Aorta (tissue), 5 donors: ENCODE measurements at regions of chr17 and their contacts with region 1.

Region 1: GRCh38 chr17:21284319-21285163 is at the start of gene MAP2K3:
- DNase-seq: peak; percentile 100
- ATAC-seq: peak; percentile 90
- H3K4me3 ChIP-seq: peak within 1 kb of the TSS; percentile 70 to 85
- H3K27ac ChIP-seq: peak within 1 kb of the TSS; percentile 63 to 94
- H3K4me1 ChIP-seq: peaks cover 3 to 8% of the 10 kb centered on the region in 2 donors
- H3K27me3 ChIP-seq: no peaks in the 10 kb centered on the region
- total RNA-seq, gene MAP2K3: 58.7 to 82.6 TPM

Region 2: DNA sequence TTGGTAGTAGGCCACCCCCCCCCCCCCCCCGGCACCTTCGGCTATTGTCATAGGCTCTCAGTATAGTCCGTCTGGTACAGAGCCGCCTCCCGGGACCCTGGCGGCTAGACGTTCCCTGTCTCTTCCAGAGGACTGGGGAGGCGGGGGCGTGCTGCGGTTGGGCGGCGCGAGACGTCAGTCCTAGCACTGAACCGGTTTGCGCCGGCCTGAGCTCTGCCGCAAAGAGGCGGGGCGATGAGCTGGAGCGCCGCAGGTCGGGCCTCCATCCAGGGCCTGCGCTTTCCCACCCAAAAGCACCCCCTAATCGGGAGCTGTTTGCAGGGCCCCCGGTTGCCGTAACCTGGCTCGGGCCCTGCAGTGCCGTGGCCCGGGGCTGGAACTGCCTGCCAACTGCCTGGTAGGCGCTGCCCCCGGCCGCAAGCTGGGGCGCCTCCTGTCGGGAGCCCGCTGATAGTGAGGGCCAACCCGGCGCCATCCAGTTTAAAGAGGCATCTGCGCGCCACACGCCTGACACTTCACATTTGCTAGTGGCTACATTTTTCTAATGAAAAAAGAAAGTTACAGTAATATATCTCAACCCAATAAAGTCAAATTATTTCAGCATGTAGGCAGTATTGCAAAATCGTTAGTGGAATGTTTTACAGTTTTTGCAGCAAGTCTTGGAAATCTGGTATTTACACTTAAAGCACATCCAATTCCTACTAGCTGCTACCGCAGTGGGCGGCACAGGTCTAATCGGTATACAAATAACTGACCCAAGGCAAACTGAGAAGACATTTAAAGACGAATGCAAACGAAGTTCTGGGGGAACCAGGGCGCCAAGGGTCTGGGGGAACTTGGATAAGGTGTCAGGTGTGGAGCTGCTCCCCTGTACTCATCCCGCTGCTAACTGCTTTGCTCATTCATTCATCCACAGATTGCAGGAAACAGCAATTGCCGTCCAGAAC is 241.0 kb before region 1 on chr17:
- intact Hi-C with region 1: loop called in 1 of 2 experiments (anchors 2 kb)
- DNase-seq: peak; percentile 99 to 100
- ATAC-seq: peak; percentile 97
- H3K4me3 ChIP-seq: peak overlapping the region; percentile 23 to 83
- H3K27ac ChIP-seq: peak overlapping the region in 1 of 2 donors; percentile 84
- H3K4me1 ChIP-seq: peaks cover 0 to 2% of the 10 kb centered on the region in 2 donors
- H3K27me3 ChIP-seq: no peaks in the 10 kb centered on the region

Region 3: GRCh38 chr17:21177854-21178600 is 106.5 kb before region 1 on chr17:
- intact Hi-C with region 1: no loop called
- DNase-seq: peak in 1 of 2 donors; percentile 57
- ATAC-seq: no peak
- H3K4me3 ChIP-seq: no peak overlapping the region
- H3K27ac ChIP-seq: no peak overlapping the region
- H3K4me1 ChIP-seq: no peaks in the 10 kb centered on the region
- H3K27me3 ChIP-seq: no peaks in the 10 kb centered on the region

Region 4: DNA sequence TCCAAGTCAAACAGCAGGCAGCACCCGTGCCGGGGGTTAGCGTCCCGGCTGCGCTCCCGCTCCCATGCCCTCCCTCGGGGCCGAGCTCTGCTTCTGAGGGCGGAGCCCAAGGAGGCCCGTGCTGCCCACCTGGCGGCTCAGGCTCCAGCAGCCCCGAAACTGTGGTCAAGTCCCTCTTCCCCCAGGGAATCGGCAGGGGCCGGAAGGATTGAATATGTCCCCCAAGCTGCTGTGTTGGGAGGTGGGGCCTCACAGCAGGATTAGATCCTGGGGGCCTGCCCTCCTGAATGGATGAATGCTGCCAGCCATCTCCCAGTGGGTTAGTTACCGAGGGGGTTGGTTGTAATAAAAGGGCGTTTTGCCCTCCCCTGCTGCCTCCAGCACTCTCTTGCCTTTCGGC is 33.9 kb after region 1 on chr17:
- intact Hi-C with region 1: loop called in 1 of 2 experiments (anchors 5 kb)
- DNase-seq: peak; percentile 49 to 75
- ATAC-seq: no peak
- H3K4me3 ChIP-seq: no peak overlapping the region
- H3K27ac ChIP-seq: no peak overlapping the region
- H3K4me1 ChIP-seq: no peaks in the 10 kb centered on the region
- H3K27me3 ChIP-seq: no peaks in the 10 kb centered on the region

Region 5: DNA sequence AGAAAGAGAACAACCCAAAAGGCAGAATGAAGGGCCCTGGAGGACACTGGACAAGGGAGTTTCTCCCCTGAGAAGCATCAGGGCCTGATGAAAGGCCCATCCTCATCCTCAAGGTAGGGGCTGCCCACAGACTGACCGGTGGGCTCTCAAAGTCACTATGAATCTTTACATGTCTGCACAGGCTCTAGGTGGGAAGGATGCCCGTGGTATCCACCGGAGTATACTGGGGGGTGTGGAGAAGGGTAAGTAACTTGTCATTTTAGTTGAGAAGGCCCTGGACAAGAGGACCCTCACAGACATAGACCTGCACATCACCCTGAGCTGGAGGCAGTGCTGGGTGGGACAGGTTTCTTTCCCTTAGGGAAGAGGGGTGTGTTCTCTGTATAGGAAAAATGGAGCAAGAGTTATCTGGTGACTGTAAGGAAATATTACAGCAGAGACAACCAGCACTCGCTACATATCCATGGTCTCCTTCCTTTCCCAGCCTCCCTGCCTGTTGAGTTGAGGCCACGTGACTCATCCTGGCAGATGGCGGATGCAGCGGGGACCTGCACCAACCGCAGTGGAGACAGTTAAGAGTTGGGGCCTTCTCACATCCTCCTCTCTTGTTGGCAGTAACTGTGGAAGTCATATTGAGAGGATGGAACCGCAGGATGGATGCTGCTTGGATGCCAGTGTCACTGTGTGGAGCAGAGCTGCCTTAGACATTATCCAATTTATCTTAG is 46.1 kb after region 1 on chr17:
- intact Hi-C with region 1: no loop called
- DNase-seq: peak; percentile 22 to 52
- ATAC-seq: peak; percentile 50
- H3K4me3 ChIP-seq: no peak overlapping the region
- H3K27ac ChIP-seq: no peak overlapping the region
- H3K4me1 ChIP-seq: no peaks in the 10 kb centered on the region
- H3K27me3 ChIP-seq: no peaks in the 10 kb centered on the region

Region 6: GRCh38 chr17:21457051-21458026 is 172.8 kb after region 1 on chr17:
- intact Hi-C with region 1: loop called (anchors 5 kb)
- DNase-seq: peak; percentile 91 to 98
- ATAC-seq: peak; percentile 93
- H3K4me3 ChIP-seq: no peak overlapping the region
- H3K27ac ChIP-seq: no peak overlapping the region
- H3K4me1 ChIP-seq: no peaks in the 10 kb centered on the region
- H3K27me3 ChIP-seq: no peaks in the 10 kb centered on the region